HEK293 (cell line): ENCODE measurements at regions of chr4 and their contacts with region 1.

Region 1: GRCh38 chr4:54322818-54323417 is 93.8 kb downstream of the PDGFRA start:
- H3K4me3 ChIP-seq: no peak overlapping the region
- H3K27ac ChIP-seq: no peak overlapping the region
- H3K4me1 ChIP-seq: no peaks in the 10 kb centered on the region
- CTCF ChIP-seq: no peak

Region 2: GRCh38 chr4:54414545-54414944 is 91.6 kb after region 1 on chr4:
- CTCF ChIA-PET with region 1: no interaction called
- POLR2A ChIA-PET with region 1: no interaction called
- H3K4me3 ChIP-seq: no peak overlapping the region
- H3K27ac ChIP-seq: no peak overlapping the region
- H3K4me1 ChIP-seq: no peaks in the 10 kb centered on the region
- CTCF ChIP-seq: no peak

Region 3: DNA sequence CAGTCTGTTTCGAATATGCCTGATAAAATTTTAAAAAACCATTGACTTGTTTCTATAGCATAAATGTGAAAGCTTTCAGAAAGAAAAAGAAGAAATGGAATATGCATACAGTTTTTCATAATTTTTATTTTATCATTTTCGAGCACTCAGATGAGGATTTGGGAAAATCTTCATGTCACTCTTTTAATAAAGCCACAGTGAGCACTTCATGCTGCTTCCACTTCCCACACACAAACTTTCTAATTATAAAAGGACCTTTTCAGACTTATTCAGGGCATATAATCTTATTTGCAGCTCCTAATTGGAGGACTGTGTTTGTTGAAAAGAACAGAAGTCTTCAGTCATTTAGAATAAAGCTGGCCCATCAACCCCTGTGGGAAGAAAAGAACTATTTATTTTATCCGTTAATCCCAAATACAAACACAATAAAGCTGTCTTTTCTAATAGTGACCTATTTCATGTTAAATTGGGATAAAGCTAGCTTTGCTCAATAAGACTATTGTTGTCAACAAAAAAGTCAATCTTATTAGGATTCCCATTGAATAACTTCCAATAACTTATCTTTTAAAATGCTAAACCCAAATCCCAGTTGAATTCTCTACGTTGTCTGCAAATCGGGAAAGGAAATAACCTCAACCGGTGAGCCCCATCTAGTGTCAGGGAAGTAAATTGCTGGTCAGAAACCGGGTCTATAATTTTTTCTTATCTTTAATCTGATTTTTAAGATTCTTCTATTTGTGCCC is 117.6 kb after region 1 on chr4:
- CTCF ChIA-PET with region 1: interaction called, 15 read pairs
- POLR2A ChIA-PET with region 1: no interaction called
- H3K4me3 ChIP-seq: no peak overlapping the region
- H3K27ac ChIP-seq: no peak overlapping the region
- H3K4me1 ChIP-seq: no peaks in the 10 kb centered on the region
- CTCF ChIP-seq: no peak